Dendritic cell treated with granulocyte-macrophage colony-stimulating factor and Interleukin-4, amounts not matched to agents 40 ng/mL and 50 ng/mL, for 4 days (primary cell): ENCODE measurements at regions of chr13 and their contacts with region 1.

Region 1: DNA sequence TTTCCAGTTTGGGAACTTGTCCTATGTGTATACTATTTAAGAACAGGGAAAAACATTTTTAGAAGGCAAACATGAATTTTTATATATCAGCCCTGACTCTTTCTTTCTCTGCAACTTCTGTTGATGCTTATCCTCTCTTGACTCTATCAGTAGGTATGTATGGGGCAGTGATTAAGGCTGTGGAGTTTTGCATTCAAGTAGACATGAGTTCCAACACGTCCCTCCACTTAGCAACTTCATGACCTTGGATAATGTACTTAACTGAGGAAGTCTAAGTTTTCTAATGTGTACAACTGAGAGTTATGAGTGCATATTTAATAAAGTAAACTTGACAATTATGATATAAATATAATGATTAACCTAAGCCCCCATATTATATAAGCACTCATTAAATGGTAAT is 414.6 kb downstream of the TDRD3 start:
- H3K4me3 Mint-ChIP-seq: no peak overlapping the region
- H3K27ac Mint-ChIP-seq: no peak overlapping the region
- H3K4me1 Mint-ChIP-seq: no peaks in the 10 kb centered on the region
- H3K27me3 Mint-ChIP-seq: no peaks in the 10 kb centered on the region

Region 2: DNA sequence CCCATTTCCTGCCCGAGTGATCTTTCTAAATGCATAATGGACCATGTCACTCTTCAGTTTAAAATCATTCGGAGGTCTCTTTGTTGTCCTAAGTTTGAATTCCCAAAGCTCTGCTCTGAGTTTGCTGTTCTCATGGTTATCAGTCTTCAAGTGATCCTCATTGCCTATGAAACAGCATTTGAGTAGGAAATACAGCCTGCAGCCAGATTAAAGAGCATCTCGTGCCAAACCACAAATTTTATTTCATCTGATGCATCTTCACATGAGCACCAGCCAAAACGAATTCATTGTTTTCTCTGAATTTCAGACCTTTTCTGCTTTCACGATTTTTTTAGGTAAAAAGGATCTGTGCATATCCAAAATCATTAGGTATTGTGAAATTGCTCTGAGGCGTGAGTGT is 115.0 kb before region 1 on chr13:
- intact Hi-C with region 1: no loop called
- H3K4me3 Mint-ChIP-seq: no peak overlapping the region
- H3K27ac Mint-ChIP-seq: no peak overlapping the region
- H3K4me1 Mint-ChIP-seq: no peaks in the 10 kb centered on the region
- H3K27me3 Mint-ChIP-seq: no peaks in the 10 kb centered on the region

Region 3: DNA sequence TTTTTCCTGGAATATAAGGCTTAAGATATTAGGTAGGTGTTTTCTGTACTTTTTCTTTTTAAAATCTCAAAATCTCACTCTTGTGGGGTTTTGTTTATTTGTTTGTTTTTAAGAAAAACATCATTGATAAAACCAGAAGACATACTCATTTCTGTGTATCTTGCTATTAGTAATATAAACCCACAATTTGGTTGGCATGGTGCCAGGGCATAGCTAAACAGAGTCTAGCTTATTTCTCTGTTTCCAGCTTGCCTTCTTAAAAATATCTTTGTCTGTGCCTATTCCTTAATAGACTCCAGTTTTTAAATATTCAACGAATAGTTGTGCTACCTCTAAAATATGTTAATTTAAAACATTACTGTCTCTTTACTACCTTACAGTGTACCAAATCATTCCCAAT is 1726.0 kb after region 1 on chr13:
- intact Hi-C with region 1: loop called (anchors 10 kb)
- H3K4me3 Mint-ChIP-seq: no peak overlapping the region
- H3K27ac Mint-ChIP-seq: no peak overlapping the region
- H3K4me1 Mint-ChIP-seq: no peaks in the 10 kb centered on the region
- H3K27me3 Mint-ChIP-seq: no peaks in the 10 kb centered on the region